MCF 10A (cell line): ENCODE measurements at regions of chr5 and their contacts with region 1.

Region 1: DNA sequence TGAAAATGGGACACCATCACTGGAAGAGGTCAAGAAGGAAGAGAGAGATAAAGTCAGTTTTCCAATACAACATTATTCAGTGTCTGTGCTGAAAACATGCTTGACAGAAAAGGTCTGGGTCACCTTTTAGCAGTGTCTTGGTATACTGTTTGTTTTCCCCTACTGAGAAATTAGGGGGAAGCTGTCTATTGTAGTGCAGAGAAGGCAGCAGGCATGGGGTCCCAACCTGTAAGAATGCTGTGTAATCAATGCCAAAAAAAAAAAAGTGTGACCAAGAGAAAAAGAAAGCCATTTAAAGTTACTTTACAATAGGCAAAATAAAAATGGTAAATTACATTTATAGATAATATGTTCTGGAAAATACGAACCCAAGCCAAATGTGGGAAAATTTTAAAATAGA is 139.3 kb downstream of the RAB3C start:
- DNase-seq: no peak
- H3K4me3 Mint-ChIP-seq: no peak overlapping the region
- H3K27ac Mint-ChIP-seq: no peak overlapping the region
- H3K4me1 Mint-ChIP-seq: no peaks in the 10 kb centered on the region
- H3K27me3 Mint-ChIP-seq: peaks cover 100% of the 10 kb centered on the region
- CTCF ChIP-seq: no peak

Region 2: DNA sequence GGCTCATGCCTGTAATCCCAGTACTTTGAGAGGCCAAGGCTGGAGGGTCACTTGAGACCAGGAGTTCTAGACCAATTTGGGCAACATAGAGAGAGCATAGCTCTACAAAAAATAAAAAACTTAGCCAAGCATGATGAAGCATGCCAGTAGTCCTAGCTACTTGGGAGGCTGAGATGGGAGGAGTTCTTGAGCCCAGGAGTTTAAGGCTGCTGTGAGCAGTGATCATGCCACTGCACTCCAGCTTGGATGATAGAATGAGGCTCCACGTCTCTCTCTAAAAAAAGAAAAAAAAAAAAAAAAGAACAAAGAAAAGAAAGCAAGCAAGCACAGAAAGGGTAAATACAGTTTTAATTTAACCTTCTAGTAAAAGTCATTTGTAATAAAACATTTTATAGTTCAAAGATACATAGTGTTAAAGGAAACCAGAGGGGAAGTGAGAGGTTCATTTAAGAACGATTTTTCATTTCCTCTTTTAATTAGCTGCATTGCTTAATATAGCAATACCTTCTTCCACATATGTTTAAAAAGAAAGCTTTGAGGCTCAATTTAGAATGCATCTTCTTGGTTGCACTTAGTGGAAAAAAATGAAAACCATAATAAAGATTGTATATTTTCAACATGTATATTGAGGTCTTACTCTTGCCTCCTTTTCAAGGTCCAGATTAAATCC is 216.1 kb before region 1 on chr5:
- CTCF ChIA-PET with region 1: no interaction called
- POLR2A ChIA-PET with region 1: no interaction called
- intact Hi-C with region 1: loop called (anchors 10 kb)
- DNase-seq: no peak
- H3K4me3 Mint-ChIP-seq: no peak overlapping the region
- H3K27ac Mint-ChIP-seq: no peak overlapping the region
- H3K4me1 Mint-ChIP-seq: no peaks in the 10 kb centered on the region
- H3K27me3 Mint-ChIP-seq: peaks cover 94% of the 10 kb centered on the region
- CTCF ChIP-seq: no peak

Region 3: DNA sequence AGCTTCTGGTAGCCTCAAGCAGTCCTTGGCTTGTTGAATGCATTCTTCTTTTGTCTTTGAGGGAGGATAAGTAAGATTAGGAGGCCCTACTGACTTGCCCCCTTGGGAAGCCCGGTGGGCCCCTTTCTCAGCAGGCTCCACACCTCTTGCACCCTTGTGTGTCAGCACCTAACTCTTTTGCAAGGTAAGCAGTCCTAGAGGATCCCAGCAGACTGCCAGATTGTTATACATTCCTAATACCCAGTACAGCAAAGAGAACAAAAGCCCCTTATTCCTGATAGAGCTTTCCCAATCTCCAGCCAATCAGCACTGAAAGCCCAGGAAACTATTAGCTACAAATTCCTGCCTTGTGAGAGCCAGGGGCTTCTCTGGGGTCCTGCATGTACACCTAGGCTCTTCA is 13.5 kb after region 1 on chr5:
- CTCF ChIA-PET with region 1: no interaction called
- POLR2A ChIA-PET with region 1: no interaction called
- intact Hi-C with region 1: no loop called
- DNase-seq: no peak
- H3K4me3 Mint-ChIP-seq: no peak overlapping the region
- H3K27ac Mint-ChIP-seq: no peak overlapping the region
- H3K4me1 Mint-ChIP-seq: no peaks in the 10 kb centered on the region
- H3K27me3 Mint-ChIP-seq: peaks cover 73% of the 10 kb centered on the region
- CTCF ChIP-seq: no peak

Region 4: GRCh38 chr5:58751222-58751837 is 29.2 kb after region 1 on chr5:
- CTCF ChIA-PET with region 1: no interaction called
- POLR2A ChIA-PET with region 1: no interaction called
- intact Hi-C with region 1: no loop called
- DNase-seq: peak; percentile 25
- H3K4me3 Mint-ChIP-seq: no peak overlapping the region
- H3K27ac Mint-ChIP-seq: no peak overlapping the region
- H3K4me1 Mint-ChIP-seq: no peaks in the 10 kb centered on the region
- H3K27me3 Mint-ChIP-seq: peaks cover 87% of the 10 kb centered on the region
- CTCF ChIP-seq: no peak